ENCODE measurements at regions of chrX and their contacts with region 1.

Region 1: GRCh38 chrX:1246816-1247215 is 21.8 kb upstream of the CSF2RA start:
- DNase-seq: peak; percentile 59 to 90 (median 80)
- ATAC-seq: peak; percentile 74
- H3K4me3 ChIP-seq: no peak overlapping the region
- H3K4me3 Mint-ChIP-seq: peak overlapping the region; percentile 62
- H3K27ac ChIP-seq: no peak overlapping the region
- H3K27ac Mint-ChIP-seq: peak overlapping the region; percentile 15
- H3K4me1 ChIP-seq: peaks cover 49% of the 10 kb centered on the region
- H3K4me1 Mint-ChIP-seq: peaks cover 37% of the 10 kb centered on the region
- H3K27me3 ChIP-seq: no peaks in the 10 kb centered on the region
- H3K27me3 Mint-ChIP-seq: no peaks in the 10 kb centered on the region
- CTCF ChIP-seq: peak; percentile 81

Region 2: GRCh38 chrX:1205680-1206611 is 40.9 kb before region 1 on chrX:
- CTCF ChIA-PET with region 1: no interaction called
- POLR2A ChIA-PET with region 1: no interaction called
- intact Hi-C with region 1: loop called (anchors 1 to 2 kb)
- DNase-seq: peak in 10 of 14 experiments; percentile 5 to 82 (median 28)
- ATAC-seq: peak; percentile 68
- H3K4me3 ChIP-seq: peak overlapping the region; percentile 53
- H3K4me3 Mint-ChIP-seq: peak overlapping the region; percentile 78
- H3K27ac ChIP-seq: no peak overlapping the region
- H3K27ac Mint-ChIP-seq: no peak overlapping the region
- H3K4me1 ChIP-seq: peaks cover 37% of the 10 kb centered on the region
- H3K4me1 Mint-ChIP-seq: peaks cover 32% of the 10 kb centered on the region
- H3K27me3 ChIP-seq: no peaks in the 10 kb centered on the region
- H3K27me3 Mint-ChIP-seq: no peaks in the 10 kb centered on the region
- CTCF ChIP-seq: no peak

Region 3: GRCh38 chrX:1591102-1591900 is 344.5 kb after region 1 on chrX and contains the start of gene AKAP17A:
- CTCF ChIA-PET with region 1: no interaction called
- POLR2A ChIA-PET with region 1: no interaction called
- intact Hi-C with region 1: loop called in 1 of 2 experiments (anchors 10 kb)
- DNase-seq: peak; percentile 93 to 100 (median 98)
- ATAC-seq: peak; percentile 89
- H3K4me3 ChIP-seq: peak within 1 kb of the TSS; percentile 80
- H3K4me3 Mint-ChIP-seq: peak within 1 kb of the TSS; percentile 95
- H3K27ac ChIP-seq: peak within 1 kb of the TSS; percentile 53 to 55
- H3K27ac Mint-ChIP-seq: peak within 1 kb of the TSS; percentile 90
- H3K4me1 ChIP-seq: peaks cover 42% of the 10 kb centered on the region
- H3K4me1 Mint-ChIP-seq: peaks cover 43% of the 10 kb centered on the region
- H3K27me3 ChIP-seq: no peaks in the 10 kb centered on the region
- H3K27me3 Mint-ChIP-seq: no peaks in the 10 kb centered on the region
- CTCF ChIP-seq: no peak
- total RNA-seq, gene AKAP17A: 143 to 149 TPM